ENCODE measurements at regions of chr15 and their contacts with region 1.

Region 1: GRCh38 chr15:92831655-92832328 is 68.3 kb upstream of the CHD2 start:
- DNase-seq: peak; percentile 80 to 90
- H3K4me3 ChIP-seq: peak overlapping the region in 1 of 4 experiments; percentile 41; a peak in 1 of 8 replicates
- H3K27ac ChIP-seq: peak overlapping the region; percentile 73
- H3K4me1 ChIP-seq: peaks cover 3 to 15% (median 11%) of the 10 kb centered on the region in 4 experiments; a peak in 6 of 7 replicates
- H3K27me3 ChIP-seq: no peaks in the 10 kb centered on the region
- CTCF ChIP-seq: no peak
- EP300 ChIP-seq: peak in 1 of 2 experiments; percentile 62; a peak in 1 of 3 replicates
- POLR2A ChIP-seq: peak; percentile 67 to 90
- RAD21 ChIP-seq: peak; percentile 36 to 42

Region 2: GRCh38 chr15:92571824-92572223 is 260.0 kb before region 1 on chr15:
- CTCF ChIA-PET with region 1: no interaction called
- POLR2A ChIA-PET with region 1: no interaction called
- DNase-seq: peak in 1 of 2 experiments; percentile 20
- H3K4me3 ChIP-seq: no peak overlapping the region
- H3K27ac ChIP-seq: no peak overlapping the region
- H3K4me1 ChIP-seq: no peaks in the 10 kb centered on the region
- H3K27me3 ChIP-seq: no peaks in the 10 kb centered on the region
- CTCF ChIP-seq: no peak
- EP300 ChIP-seq: no peak
- POLR2A ChIP-seq: no peak
- RAD21 ChIP-seq: no peak

Region 3: DNA sequence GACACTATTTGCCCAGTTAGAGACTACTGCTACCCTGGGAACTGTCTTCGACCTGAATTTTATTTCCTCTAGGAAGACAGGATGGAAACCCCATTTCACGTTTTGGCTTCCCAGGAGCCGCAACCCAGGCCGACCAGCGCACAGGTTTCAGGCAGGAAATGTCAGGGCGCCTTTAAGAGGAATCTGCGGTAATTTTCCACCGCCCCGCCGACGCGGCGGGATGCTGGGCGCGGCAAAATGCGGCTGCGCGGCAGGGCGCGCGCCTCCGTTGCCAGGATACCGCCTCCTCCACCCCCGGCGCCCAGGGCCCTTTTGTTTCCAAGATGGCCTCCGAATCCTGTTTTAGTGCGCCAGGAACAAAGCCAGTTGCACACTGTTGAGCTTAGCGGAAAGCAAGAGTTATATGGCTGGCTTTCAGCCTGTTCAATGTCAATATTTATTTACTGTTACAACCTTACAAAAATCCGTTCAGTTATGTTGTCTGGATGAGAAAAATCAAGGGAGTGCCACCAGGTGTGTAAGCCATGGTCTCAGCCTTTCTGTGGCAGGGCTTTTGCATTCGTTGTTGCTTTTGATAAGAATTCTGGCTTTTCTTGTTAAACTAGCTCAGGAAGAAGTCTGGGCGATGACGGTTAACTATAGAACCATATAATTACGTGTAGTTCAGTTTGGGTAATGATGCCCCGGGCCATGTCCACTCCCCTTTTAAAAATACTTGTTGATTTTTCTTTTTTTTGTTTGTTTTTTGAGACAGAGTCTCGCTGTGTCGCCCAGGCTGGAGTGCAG is 11.4 kb before region 1 on chr15:
- CTCF ChIA-PET with region 1: interaction called, 11 read pairs
- POLR2A ChIA-PET with region 1: interaction called, 68 read pairs
- DNase-seq: peak; percentile 70 to 94
- H3K4me3 ChIP-seq: peak overlapping the region; percentile 13 to 49 (median 34); a peak in 5 of 8 replicates
- H3K27ac ChIP-seq: peak overlapping the region; percentile 84
- H3K4me1 ChIP-seq: peaks cover 15 to 44% (median 39%) of the 10 kb centered on the region in 4 experiments; a peak in 6 of 7 replicates
- H3K27me3 ChIP-seq: peaks cover 0 to 2% (median 0%) of the 10 kb centered on the region in 4 experiments; a peak in 1 of 7 replicates
- CTCF ChIP-seq: no peak
- EP300 ChIP-seq: peak in 1 of 2 experiments; percentile 87; a peak in 2 of 3 replicates
- POLR2A ChIP-seq: peak in 1 of 2 experiments; percentile 77; a peak in 2 of 3 replicates
- RAD21 ChIP-seq: no peak

Region 4: GRCh38 chr15:92868992-92869988 is 37.5 kb after region 1 on chr15:
- CTCF ChIA-PET with region 1: interaction called, 3 read pairs
- POLR2A ChIA-PET with region 1: interaction called, 12 read pairs
- DNase-seq: peak in 1 of 2 experiments; percentile 40
- H3K4me3 ChIP-seq: no peak overlapping the region
- H3K27ac ChIP-seq: no peak overlapping the region
- H3K4me1 ChIP-seq: no peaks in the 10 kb centered on the region; a peak in 1 of 7 replicates
- H3K27me3 ChIP-seq: no peaks in the 10 kb centered on the region; a peak in 1 of 7 replicates
- CTCF ChIP-seq: no peak
- EP300 ChIP-seq: no peak
- POLR2A ChIP-seq: no peak
- RAD21 ChIP-seq: no peak